Heart left ventricle (tissue), 16 donors: ENCODE measurements at regions of chr7 and their contacts with region 1.

Region 1: DNA sequence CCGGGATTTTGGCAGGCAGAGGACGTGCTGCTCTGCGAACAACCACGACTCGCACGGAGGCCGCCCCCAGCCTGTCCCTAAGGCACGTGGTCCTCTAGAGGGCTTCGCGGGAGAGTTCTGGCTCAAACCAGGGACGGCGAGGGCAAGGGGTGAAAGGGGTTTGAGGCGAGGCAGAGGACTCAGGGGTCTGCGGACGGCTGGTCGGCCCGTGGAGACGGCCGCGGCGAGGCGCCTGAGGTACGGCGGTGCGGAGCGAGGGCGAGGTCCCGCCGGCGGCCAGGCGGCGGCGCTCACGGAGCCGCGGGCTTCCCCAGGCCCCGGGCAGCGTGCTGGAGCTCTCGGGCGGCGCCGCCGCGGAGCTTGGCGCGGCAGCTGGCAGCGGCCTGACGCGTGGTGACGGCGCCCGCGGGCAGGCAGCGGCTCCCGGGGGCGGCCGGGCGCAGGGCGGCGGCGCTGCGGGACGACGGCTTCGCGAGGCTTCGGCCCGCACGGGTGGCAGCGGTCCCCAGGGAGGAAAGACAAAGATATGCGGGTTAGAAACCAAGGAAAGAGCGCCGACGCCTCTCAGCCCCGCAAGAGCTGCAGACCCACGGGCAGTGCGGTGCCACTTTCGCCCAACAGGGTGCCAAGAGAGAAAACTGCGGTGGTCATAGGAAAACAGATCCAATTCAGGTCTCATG is 44.8 kb downstream of the ZNF800 start:
- DNase-seq: peak; percentile 46 to 83 (median 65)
- ATAC-seq: peak; percentile 42 to 99 (median 92)
- H3K4me3 ChIP-seq: peak overlapping the region in 9 of 12 donors; percentile 31 to 55 (median 42)
- H3K27ac ChIP-seq: no peak overlapping the region
- H3K4me1 ChIP-seq: peaks cover 0 to 8% (median 0%) of the 10 kb centered on the region in 12 donors
- H3K27me3 ChIP-seq: no peaks in the 10 kb centered on the region
- CTCF ChIP-seq: peak in 9 of 12 donors; percentile 30 to 73 (median 58)
- POLR2A ChIP-seq: no peak

Region 2: GRCh38 chr7:126840869-126841268 is 506.8 kb before region 1 on chr7:
- intact Hi-C with region 1: no loop called
- DNase-seq: no peak
- ATAC-seq: no peak
- H3K4me3 ChIP-seq: no peak overlapping the region
- H3K27ac ChIP-seq: no peak overlapping the region
- H3K4me1 ChIP-seq: no peaks in the 10 kb centered on the region
- H3K27me3 ChIP-seq: peaks cover 0 to 3% (median 0%) of the 10 kb centered on the region in 9 donors
- CTCF ChIP-seq: no peak
- POLR2A ChIP-seq: no peak

Region 3: DNA sequence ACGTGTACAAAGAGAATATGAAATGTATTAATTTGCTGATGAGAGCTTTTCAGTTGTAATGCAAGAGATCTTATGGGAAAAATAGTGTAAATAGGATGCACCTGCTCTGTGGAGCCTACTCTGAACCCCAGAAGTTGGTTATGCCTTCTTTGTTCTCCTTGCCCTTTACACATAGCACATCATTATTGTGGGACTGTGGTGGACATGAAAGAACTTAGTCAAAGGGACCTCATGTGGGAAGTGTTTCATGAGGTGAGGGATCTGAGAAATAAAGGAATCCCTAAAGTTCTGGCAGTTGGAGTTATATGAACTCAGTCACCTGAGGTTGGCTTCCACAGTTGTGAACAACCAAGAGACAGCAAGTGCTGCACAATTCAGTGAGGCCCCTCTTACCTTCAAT is 161.0 kb before region 1 on chr7:
- intact Hi-C with region 1: no loop called
- DNase-seq: no peak
- ATAC-seq: no peak
- H3K4me3 ChIP-seq: no peak overlapping the region
- H3K27ac ChIP-seq: no peak overlapping the region
- H3K4me1 ChIP-seq: peaks cover 0 to 11% (median 0%) of the 10 kb centered on the region in 12 donors
- H3K27me3 ChIP-seq: no peaks in the 10 kb centered on the region
- CTCF ChIP-seq: no peak
- POLR2A ChIP-seq: no peak

Region 4: GRCh38 chr7:127214956-127215718 is 132.6 kb before region 1 on chr7:
- intact Hi-C with region 1: no loop called
- DNase-seq: no peak
- ATAC-seq: no peak
- H3K4me3 ChIP-seq: no peak overlapping the region
- H3K27ac ChIP-seq: no peak overlapping the region
- H3K4me1 ChIP-seq: no peaks in the 10 kb centered on the region
- H3K27me3 ChIP-seq: peaks cover 0 to 6% (median 0%) of the 10 kb centered on the region in 9 donors
- CTCF ChIP-seq: no peak
- POLR2A ChIP-seq: no peak

Region 5: DNA sequence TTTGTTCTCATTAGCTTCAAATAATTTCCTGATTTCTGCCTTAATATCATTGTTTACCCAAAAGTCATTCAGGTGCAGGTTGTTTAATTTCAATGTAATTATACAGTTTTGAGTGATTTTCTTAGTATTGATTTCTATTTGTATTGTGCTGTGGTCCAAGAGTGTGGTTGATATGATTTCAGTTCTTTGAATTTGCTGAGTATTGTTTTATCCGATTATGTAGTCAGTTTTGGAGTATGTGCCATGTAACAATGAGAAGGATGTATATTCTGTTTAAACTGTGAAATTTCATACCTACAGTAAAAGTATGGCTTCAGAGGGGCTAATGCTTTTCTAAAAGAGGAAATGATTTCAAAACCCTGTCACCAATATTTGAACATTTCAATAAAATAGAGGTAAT is 77.6 kb before region 1 on chr7:
- intact Hi-C with region 1: no loop called
- DNase-seq: no peak
- ATAC-seq: no peak
- H3K4me3 ChIP-seq: no peak overlapping the region
- H3K27ac ChIP-seq: no peak overlapping the region
- H3K4me1 ChIP-seq: no peaks in the 10 kb centered on the region
- H3K27me3 ChIP-seq: peaks cover 0 to 32% (median 3%) of the 10 kb centered on the region in 9 donors
- CTCF ChIP-seq: no peak
- POLR2A ChIP-seq: no peak

Region 6: GRCh38 chr7:127392566-127393367 is 45.1 kb after region 1 on chr7 and contains the start of gene ZNF800:
- intact Hi-C with region 1: loop called in 3 of 10 experiments (anchors 5 to 10 kb)
- DNase-seq: peak; percentile 93 to 95 (median 94)
- ATAC-seq: peak; percentile 99
- H3K4me3 ChIP-seq: peak within 1 kb of the TSS; percentile 76 to 99 (median 90)
- H3K27ac ChIP-seq: peak within 1 kb of the TSS; percentile 88 to 99 (median 94)
- H3K4me1 ChIP-seq: peaks cover 0 to 47% (median 20%) of the 10 kb centered on the region in 12 donors
- H3K27me3 ChIP-seq: no peaks in the 10 kb centered on the region
- CTCF ChIP-seq: peak in 1 of 12 donors; percentile 5
- POLR2A ChIP-seq: peak; percentile 16 to 86
- total RNA-seq, gene ZNF800: 20.3 to 34.7 (median 22.9) TPM

Region 7: DNA sequence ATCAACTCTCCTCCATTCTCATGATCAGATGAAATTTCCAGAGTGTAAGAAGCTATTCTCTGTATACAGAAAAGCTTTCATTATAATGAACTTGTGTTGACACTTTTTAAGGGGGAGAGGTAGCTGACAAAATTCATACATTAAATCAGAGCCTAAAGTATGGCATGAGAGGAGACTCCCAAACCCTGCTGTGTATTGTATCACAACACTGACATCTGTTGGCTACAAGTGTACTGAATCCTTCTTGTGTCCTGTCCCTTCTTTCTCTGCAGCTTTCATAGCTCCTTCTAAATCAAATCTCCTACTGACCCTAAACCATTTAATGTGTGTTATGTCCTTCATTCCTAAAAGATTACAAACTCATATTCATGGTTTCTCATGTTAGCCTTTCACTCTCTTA is 166.8 kb after region 1 on chr7:
- intact Hi-C with region 1: loop called in 2 of 10 experiments (anchors 10 kb)
- DNase-seq: no peak
- ATAC-seq: peak; percentile 51 to 62 (median 60)
- H3K4me3 ChIP-seq: no peak overlapping the region
- H3K27ac ChIP-seq: no peak overlapping the region
- H3K4me1 ChIP-seq: no peaks in the 10 kb centered on the region
- H3K27me3 ChIP-seq: peaks cover 0 to 19% (median 0%) of the 10 kb centered on the region in 9 donors
- CTCF ChIP-seq: peak in 9 of 12 donors; percentile 15 to 53 (median 41)
- POLR2A ChIP-seq: no peak